ENCODE measurements at regions of chr11 and their contacts with region 1.

Region 1: GRCh38 chr11:62880803-62881578 is at the start of gene SLC3A2:
- DNase-seq: peak; percentile 91
- CTCF ChIP-seq: peak; percentile 80

Region 2: GRCh38 chr11:62860835-62861563 is 20.0 kb before region 1 on chr11:
- CTCF ChIA-PET with region 1: interaction called, 30 read pairs
- POLR2A ChIA-PET with region 1: interaction called, 14 read pairs
- DNase-seq: no peak
- CTCF ChIP-seq: no peak

Region 3: GRCh38 chr11:62914416-62914815 is 33.4 kb after region 1 on chr11:
- CTCF ChIA-PET with region 1: no interaction called
- POLR2A ChIA-PET with region 1: interaction called, 11 read pairs
- DNase-seq: no peak
- CTCF ChIP-seq: no peak

Region 4: DNA sequence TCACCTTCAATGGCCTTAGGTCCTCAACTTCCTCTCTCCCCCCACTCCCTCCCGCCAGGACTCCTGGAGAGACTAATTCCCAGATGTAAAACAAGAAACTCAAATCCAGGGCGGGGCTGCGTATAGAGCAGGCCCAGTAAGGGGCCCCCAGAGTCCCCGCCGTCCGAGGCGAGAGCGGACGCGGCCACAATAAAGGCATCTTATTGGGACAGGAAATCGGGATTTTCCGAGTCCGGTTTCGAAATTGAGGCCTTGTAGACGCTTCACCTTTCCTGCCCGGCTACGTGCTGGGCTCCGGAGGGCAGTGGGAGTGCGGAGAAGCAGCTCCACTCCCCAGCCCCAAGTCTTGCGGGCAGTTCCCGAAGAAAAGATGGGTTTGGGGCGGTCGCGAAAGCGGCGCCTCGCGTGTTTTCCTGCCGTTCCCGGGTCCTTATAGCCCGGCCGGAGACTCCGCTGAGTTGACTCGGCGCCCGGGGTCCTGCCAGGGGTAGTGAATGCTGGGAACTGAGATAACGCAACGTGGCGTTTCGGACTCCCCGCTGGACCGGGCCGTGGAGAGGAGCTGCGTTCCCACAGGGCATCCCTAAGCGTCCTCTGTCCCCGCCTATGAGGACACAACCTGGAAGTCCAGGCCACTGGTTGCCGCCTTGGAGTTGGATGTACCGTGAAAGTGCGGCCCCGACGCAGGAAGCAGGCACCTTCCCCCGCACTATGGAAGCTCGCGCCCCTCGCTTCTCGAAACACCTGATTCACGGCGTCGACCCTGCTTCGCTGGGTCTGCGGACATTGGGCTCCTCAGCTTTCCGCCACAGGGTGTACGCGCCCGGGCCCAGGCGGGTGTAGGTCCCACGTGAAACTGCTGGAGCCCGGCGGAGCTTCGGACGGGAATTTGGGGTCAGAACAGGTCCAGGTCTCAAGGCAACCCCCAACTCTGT is 45.0 kb after region 1 on chr11:
- CTCF ChIA-PET with region 1: no interaction called
- POLR2A ChIA-PET with region 1: no interaction called
- DNase-seq: no peak
- CTCF ChIP-seq: no peak

Measured in GM10248 (cell line).